Activated T-helper 1 cell treated with anti-CD3 and anti-CD28 coated beads, Interleukin-12 subunit alpha, Interleukin-12 subunit beta, Interleukin-2, Interleukin-4 antibody, amounts not matched to agents 30 ng/mL and 10 ng/mL and 1 ng/mL, durations not matched to agents 14 hours and 24 hours and 36 hours (primary cell): ENCODE measurements at regions of chr3 and their contacts with region 1.

Region 1: GRCh38 chr3:126083913-126084767 is at the start of gene SLC41A3:
- DNase-seq: peak; percentile 90
- H3K4me3 Mint-ChIP-seq: peak within 1 kb of the TSS; percentile 93
- H3K27ac Mint-ChIP-seq: peak within 1 kb of the TSS; percentile 89
- H3K4me1 Mint-ChIP-seq: peaks cover 26% of the 10 kb centered on the region
- H3K27me3 Mint-ChIP-seq: no peaks in the 10 kb centered on the region
- total RNA-seq, gene SLC41A3: 17.3 and 23.4 TPM in 2 replicates

Region 2: DNA sequence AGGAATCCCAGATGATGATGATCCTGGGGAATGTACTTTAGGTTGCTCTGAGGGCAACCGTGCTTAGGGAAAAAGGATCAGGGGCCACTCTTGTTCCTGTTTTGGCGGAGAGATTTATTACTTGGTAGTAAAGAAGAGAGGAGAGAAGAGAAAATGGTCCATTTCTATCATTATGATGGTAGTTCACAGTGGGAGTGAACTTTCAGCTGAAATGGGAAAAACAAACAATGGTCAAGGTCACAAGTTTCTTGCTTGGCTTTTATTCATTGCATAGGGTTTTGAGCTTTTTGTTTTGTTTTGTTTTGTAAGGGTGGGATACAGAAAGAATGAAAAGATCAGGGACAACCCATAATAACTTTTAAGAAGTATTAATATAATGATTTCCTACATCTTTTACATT is 1361.6 kb before region 1 on chr3:
- intact Hi-C with region 1: loop called (anchors 10 kb)
- DNase-seq: no peak
- H3K4me3 Mint-ChIP-seq: no peak overlapping the region
- H3K27ac Mint-ChIP-seq: no peak overlapping the region
- H3K4me1 Mint-ChIP-seq: no peaks in the 10 kb centered on the region
- H3K27me3 Mint-ChIP-seq: peaks cover 46% of the 10 kb centered on the region

Region 3: DNA sequence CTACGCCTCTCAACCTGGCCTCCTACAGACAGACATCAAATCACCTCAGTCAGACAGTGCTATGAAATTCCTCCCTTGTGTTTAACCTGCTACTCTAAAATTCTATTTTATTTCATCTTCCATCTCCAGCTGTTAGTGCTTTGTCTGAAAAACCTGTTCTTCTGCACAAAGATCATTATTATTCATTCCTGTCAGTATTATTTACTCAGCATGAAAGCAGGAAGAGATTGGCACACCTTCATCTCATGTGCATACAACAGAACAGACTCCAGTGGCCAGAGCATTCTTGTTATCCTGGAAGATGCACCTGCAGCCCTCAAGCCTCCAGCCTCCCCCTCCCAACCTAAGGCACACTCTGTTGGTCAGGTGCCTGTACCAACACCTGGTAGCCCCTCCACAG is 117.0 kb before region 1 on chr3:
- intact Hi-C with region 1: loop called (anchors 5 kb)
- DNase-seq: no peak
- H3K4me3 Mint-ChIP-seq: no peak overlapping the region
- H3K27ac Mint-ChIP-seq: no peak overlapping the region
- H3K4me1 Mint-ChIP-seq: peaks cover 3% of the 10 kb centered on the region
- H3K27me3 Mint-ChIP-seq: peaks cover 23% of the 10 kb centered on the region

Region 4: GRCh38 chr3:126357295-126358037 is 273.3 kb after region 1 on chr3 and contains the start of gene KLF15:
- intact Hi-C with region 1: loop called (anchors 1 kb)
- DNase-seq: peak; percentile 73
- H3K4me3 Mint-ChIP-seq: peak within 1 kb of the TSS; percentile 84
- H3K27ac Mint-ChIP-seq: peak within 1 kb of the TSS; percentile 48
- H3K4me1 Mint-ChIP-seq: peaks cover 8% of the 10 kb centered on the region
- H3K27me3 Mint-ChIP-seq: peaks cover 46% of the 10 kb centered on the region
- total RNA-seq, gene KLF15: 0.08 and 0.22 TPM in 2 replicates

Region 5: GRCh38 chr3:126394575-126395228 is 310.6 kb after region 1 on chr3 and contains the start of gene CFAP100:
- intact Hi-C with region 1: no loop called
- DNase-seq: no peak
- H3K4me3 Mint-ChIP-seq: no peak within 1 kb of the TSS
- H3K27ac Mint-ChIP-seq: no peak within 1 kb of the TSS
- H3K4me1 Mint-ChIP-seq: peaks cover 1% of the 10 kb centered on the region
- H3K27me3 Mint-ChIP-seq: peaks cover 28% of the 10 kb centered on the region
- total RNA-seq, gene CFAP100: not detected in 2 replicates

Region 6: GRCh38 chr3:126982471-126983175 is 898.5 kb after region 1 on chr3 and contains the start of gene PLXNA1:
- intact Hi-C with region 1: loop called (anchors 5 kb)
- DNase-seq: peak; percentile 87
- H3K4me3 Mint-ChIP-seq: peak within 1 kb of the TSS; percentile 81
- H3K27ac Mint-ChIP-seq: peak within 1 kb of the TSS; percentile 90
- H3K4me1 Mint-ChIP-seq: peaks cover 23% of the 10 kb centered on the region
- H3K27me3 Mint-ChIP-seq: peaks cover 4% of the 10 kb centered on the region
- total RNA-seq, gene PLXNA1: 22.1 and 25.5 TPM in 2 replicates